ENCODE measurements at regions of chr7 and their contacts with region 1.

Region 1: GRCh38 chr7:96075510-96076349 is 246.2 kb downstream of the SLC25A13 start:
- DNase-seq: peak; percentile 58
- H3K4me3 Mint-ChIP-seq: peak overlapping the region; percentile 71
- H3K27ac Mint-ChIP-seq: no peak overlapping the region
- H3K4me1 Mint-ChIP-seq: peaks cover 2% of the 10 kb centered on the region
- H3K27me3 Mint-ChIP-seq: peaks cover 30% of the 10 kb centered on the region

Region 2: DNA sequence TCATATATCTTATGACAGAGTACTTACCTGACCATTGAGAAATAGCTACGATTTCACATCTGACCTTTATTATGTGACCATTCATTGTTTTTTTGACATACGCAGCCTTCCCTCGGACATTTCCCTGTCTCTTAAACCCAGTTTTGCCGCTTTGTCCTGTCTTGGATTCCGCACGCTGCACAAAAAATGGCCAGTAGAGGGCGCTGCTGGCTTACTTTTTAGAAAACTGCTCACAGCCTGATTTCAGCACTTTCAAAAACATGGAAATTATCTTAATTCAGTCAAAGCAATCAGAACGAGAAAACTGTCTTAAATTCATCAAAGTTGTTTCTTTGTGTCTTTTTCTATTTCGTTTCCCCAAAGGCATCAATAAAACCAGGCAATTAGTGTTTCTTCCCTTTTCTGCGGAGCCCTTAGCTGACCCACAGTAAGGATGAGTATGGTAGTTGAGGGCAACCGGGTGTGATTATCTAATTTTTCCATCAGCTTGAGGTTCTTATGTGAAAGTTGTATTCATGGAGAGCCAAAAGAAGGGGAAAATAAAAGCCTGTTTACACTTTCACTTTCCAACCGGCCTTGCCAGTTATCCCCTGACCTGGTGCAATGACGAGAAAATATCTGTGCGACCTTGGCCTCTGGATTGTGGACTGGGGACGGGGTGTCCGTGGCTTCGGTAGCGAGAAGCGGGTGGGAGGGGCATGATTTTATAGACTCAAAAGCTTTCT is 159.0 kb before region 1 on chr7:
- CTCF ChIA-PET with region 1: no interaction called
- intact Hi-C with region 1: loop called (anchors 2 kb)
- DNase-seq: peak; percentile 85
- H3K4me3 Mint-ChIP-seq: no peak overlapping the region
- H3K27ac Mint-ChIP-seq: no peak overlapping the region
- H3K4me1 Mint-ChIP-seq: peaks cover 3% of the 10 kb centered on the region
- H3K27me3 Mint-ChIP-seq: peaks cover 24% of the 10 kb centered on the region

Region 3: DNA sequence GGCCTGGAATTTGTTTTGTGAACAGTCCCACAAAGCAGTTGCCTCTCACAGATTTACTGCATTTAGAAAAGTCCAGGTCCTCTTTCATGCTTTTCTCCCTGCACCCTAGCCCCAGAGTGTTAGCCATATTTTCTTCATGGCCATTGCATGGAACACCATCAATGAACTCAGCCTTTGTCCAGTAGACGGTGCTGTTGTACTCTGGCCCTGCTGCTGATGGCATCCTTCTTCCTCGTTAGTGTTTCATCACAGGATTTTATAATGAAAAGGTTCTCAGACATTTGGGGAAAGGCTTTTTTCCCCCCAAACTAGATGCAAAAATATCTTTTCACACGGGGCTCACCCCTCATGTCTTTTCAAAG is 339.2 kb after region 1 on chr7:
- CTCF ChIA-PET with region 1: no interaction called
- intact Hi-C with region 1: loop called (anchors 2 kb)
- DNase-seq: peak; percentile 69
- H3K4me3 Mint-ChIP-seq: no peak overlapping the region
- H3K27ac Mint-ChIP-seq: no peak overlapping the region
- H3K4me1 Mint-ChIP-seq: no peaks in the 10 kb centered on the region
- H3K27me3 Mint-ChIP-seq: peaks cover 18% of the 10 kb centered on the region

Region 4: GRCh38 chr7:96508371-96508770 is 432.6 kb after region 1 on chr7:
- CTCF ChIA-PET with region 1: no interaction called
- intact Hi-C with region 1: loop called (anchors 10 kb)
- DNase-seq: no peak
- H3K4me3 Mint-ChIP-seq: no peak overlapping the region
- H3K27ac Mint-ChIP-seq: no peak overlapping the region
- H3K4me1 Mint-ChIP-seq: no peaks in the 10 kb centered on the region
- H3K27me3 Mint-ChIP-seq: peaks cover 17% of the 10 kb centered on the region

Region 5: DNA sequence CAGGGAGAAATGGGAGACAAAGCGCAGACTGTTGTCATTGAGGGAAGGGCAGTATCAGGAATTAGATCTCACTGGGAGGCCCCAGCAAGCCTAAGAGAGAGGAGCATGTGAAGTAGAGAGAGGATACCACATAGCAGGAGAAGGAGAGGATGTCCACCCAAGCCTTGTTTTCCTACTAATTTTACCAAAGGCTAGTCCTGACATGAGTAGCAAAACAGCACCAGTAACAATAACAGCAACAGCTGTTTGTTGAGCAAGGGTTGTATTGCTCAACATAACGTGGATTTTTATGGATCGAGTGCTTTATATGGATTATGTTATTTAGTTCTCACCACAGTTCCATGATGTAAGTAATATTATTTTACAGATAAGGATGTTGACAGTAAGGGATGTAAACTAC is 794.4 kb after region 1 on chr7:
- CTCF ChIA-PET with region 1: no interaction called
- intact Hi-C with region 1: loop called (anchors 5 kb)
- DNase-seq: no peak
- H3K4me3 Mint-ChIP-seq: no peak overlapping the region
- H3K27ac Mint-ChIP-seq: no peak overlapping the region
- H3K4me1 Mint-ChIP-seq: no peaks in the 10 kb centered on the region
- H3K27me3 Mint-ChIP-seq: peaks cover 13% of the 10 kb centered on the region